ENCODE measurements at regions of chr11 and their contacts with region 1.

Region 1: DNA sequence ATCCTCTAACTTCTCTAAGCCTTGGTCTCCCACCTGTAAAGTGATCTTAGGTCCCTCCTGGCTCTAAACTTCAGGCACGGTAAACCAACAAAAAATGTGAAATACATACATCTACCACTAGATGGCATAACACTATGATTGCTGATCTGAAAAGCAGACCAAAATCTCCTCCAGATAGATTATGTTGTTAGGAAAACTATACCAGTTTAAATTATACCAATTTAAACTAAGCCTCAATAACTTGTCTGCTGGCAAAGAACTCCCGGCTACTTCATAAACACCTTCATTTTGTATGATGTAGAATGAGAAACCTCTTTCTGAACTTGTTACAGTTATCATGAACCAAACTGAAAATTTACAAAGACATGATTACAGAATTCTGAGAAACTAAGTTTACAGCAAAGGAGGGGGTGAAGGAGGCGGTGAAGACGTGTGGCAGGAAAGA is 85.9 kb downstream of the SBF2 start:
- DNase-seq: no peak
- ATAC-seq: peak; percentile 37
- H3K4me3 Mint-ChIP-seq: no peak overlapping the region
- H3K27ac Mint-ChIP-seq: no peak overlapping the region
- H3K4me1 Mint-ChIP-seq: no peaks in the 10 kb centered on the region
- H3K27me3 Mint-ChIP-seq: no peaks in the 10 kb centered on the region
- CTCF ChIP-seq: peak; percentile 31

Region 2: DNA sequence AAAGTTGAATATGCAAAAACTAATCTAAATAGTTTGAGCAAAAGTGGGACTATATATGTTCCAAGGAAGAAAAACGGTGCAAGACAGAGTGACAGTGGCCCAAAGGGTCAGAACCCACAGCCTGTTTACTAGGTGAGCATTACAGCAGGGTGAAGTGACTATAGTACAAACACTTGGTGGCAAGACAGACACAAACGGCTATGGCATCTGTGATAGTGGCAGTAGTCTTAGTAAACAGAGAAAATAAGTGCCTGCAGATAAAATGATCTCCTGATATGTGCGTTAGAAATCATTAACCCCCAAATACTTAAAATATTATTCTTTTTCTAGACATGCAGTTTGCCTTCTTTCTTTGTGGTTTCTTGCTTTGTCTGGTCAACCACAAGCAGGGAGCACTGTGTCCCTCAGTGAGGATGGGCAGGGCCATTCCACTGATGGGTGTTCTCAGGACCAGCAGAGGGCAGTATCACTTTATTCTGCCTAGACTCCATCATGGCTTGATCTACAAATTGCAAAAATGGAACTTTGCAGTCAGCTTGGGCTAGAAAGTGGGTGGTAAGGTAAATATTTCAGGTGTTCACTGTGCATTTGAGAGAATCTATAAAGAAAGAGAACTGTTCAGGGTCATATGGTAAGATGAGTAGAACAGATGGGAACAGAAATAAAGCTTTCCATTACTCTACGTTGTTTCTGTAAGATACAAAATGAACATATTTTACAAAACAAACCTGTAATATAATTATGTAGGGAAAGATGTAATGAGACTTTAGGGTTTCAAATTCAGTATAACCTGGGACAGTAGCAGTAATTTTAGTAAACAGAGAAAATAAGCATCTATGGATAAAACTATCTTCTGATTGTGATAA is 346.1 kb before region 1 on chr11:
- CTCF ChIA-PET with region 1: no interaction called
- POLR2A ChIA-PET with region 1: no interaction called
- intact Hi-C with region 1: loop called (anchors 10 kb)
- DNase-seq: no peak
- ATAC-seq: peak; percentile 82
- H3K4me3 Mint-ChIP-seq: no peak overlapping the region
- H3K27ac Mint-ChIP-seq: no peak overlapping the region
- H3K4me1 Mint-ChIP-seq: peaks cover 31% of the 10 kb centered on the region
- H3K27me3 Mint-ChIP-seq: no peaks in the 10 kb centered on the region
- CTCF ChIP-seq: no peak

Region 3: GRCh38 chr11:10366568-10367370 is 158.6 kb after region 1 on chr11:
- CTCF ChIA-PET with region 1: interaction called, 6 read pairs
- POLR2A ChIA-PET with region 1: no interaction called
- intact Hi-C with region 1: loop called (anchors 1 kb)
- DNase-seq: peak; percentile 28
- ATAC-seq: peak; percentile 77
- H3K4me3 Mint-ChIP-seq: peak overlapping the region; percentile 58
- H3K27ac Mint-ChIP-seq: no peak overlapping the region
- H3K4me1 Mint-ChIP-seq: peaks cover 5% of the 10 kb centered on the region
- H3K27me3 Mint-ChIP-seq: peaks cover 8% of the 10 kb centered on the region
- CTCF ChIP-seq: peak; percentile 26

Region 4: DNA sequence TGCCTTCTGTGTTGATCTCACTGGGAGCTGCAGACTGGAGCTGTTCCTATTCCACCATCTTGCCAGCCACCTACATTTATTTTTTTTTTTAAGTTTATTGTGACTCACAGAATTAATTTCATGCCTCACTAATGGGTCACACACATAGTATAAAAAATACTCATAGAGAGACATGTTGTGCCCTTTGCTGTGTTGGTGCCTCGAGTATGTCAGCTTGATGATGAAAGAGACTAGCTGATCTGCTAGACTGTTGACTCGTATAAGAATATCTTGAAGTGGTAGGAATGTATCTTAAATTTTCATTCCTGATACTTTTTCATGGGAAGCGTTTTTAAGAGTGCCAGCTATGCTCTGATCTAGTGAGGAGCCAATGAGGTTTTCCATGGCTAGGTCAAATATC is 218.3 kb after region 1 on chr11:
- CTCF ChIA-PET with region 1: no interaction called
- POLR2A ChIA-PET with region 1: no interaction called
- intact Hi-C with region 1: no loop called
- DNase-seq: no peak
- ATAC-seq: no peak
- H3K4me3 Mint-ChIP-seq: no peak overlapping the region
- H3K27ac Mint-ChIP-seq: no peak overlapping the region
- H3K4me1 Mint-ChIP-seq: no peaks in the 10 kb centered on the region
- H3K27me3 Mint-ChIP-seq: peaks cover 11% of the 10 kb centered on the region
- CTCF ChIP-seq: no peak